ENCODE measurements at regions of chr14 and their contacts with region 1.

Region 1: DNA sequence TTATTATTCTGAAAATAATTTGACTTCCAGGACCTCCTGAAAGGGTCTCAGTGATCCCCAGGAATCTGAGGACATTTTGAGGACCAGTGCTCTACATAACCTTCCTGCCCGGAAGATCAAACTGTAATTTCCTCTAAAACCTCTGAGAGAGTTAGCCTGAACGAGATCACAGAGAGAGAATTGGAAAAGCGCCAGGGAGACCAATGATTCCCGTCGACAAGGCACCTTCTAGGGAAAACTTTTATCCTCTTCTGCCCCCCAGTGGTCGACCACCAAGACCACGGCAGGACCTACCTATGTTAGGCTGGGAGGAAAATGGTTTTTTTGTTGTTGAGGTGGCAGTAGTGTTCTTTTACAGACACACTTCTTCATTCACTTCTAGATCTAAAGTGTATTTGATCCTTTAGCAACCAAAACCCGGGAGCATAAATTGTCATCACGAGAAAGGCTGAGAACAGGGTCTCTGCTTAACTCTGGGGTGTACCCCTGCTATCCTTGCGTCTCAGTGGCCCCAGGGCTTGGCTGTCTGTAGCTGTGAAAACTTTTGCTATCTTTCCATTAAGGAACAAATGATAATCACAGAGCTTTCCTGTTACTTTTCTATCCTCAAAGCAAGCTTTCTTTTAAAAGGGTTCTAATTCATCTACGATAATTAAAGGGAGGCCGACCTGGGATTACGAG is 62.9 kb upstream of the NID2 start:
- DNase-seq: peak; percentile 93
- H3K4me3 ChIP-seq: no peak overlapping the region
- H3K27ac ChIP-seq: no peak overlapping the region
- H3K27me3 ChIP-seq: no peaks in the 10 kb centered on the region
- CTCF ChIP-seq: peak; percentile 77

Region 2: DNA sequence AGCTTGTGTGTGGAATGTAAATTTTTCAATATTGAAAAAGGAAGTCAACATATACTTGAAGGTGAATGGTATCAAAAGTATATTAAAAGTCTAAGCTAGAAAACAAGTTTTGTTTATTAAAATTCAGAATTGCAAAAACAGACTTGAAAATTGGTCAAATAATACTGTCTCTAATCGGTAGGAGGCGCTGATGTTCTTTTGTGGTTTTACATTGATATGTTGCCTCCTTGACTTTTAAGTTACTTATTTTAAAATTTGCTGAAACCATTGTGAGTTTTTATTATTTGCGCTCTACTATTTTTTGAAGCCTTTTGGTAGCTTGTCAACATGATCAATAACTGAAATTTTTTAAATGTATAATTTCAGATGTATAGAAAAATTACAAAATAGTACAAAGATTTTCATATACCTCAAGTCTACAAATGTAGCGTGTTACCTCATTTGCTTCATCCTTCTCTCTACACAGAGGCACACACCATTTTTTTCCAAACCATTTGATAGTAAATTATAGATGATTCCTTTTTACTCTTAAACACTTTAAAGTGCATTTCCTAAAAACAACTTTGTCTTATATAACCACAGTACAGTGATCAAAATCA is 135.5 kb before region 1 on chr14:
- CTCF ChIA-PET with region 1: interaction called, 101 read pairs
- POLR2A ChIA-PET with region 1: no interaction called
- DNase-seq: no peak
- H3K4me3 ChIP-seq: no peak overlapping the region
- H3K27ac ChIP-seq: no peak overlapping the region
- H3K27me3 ChIP-seq: no peaks in the 10 kb centered on the region
- CTCF ChIP-seq: peak; percentile 75

Region 3: GRCh38 chr14:52015411-52016030 is 116.3 kb before region 1 on chr14:
- CTCF ChIA-PET with region 1: interaction called, 10 read pairs
- POLR2A ChIA-PET with region 1: no interaction called
- DNase-seq: no peak
- H3K4me3 ChIP-seq: no peak overlapping the region
- H3K27ac ChIP-seq: no peak overlapping the region
- H3K27me3 ChIP-seq: no peaks in the 10 kb centered on the region
- CTCF ChIP-seq: peak; percentile 48

Region 4: DNA sequence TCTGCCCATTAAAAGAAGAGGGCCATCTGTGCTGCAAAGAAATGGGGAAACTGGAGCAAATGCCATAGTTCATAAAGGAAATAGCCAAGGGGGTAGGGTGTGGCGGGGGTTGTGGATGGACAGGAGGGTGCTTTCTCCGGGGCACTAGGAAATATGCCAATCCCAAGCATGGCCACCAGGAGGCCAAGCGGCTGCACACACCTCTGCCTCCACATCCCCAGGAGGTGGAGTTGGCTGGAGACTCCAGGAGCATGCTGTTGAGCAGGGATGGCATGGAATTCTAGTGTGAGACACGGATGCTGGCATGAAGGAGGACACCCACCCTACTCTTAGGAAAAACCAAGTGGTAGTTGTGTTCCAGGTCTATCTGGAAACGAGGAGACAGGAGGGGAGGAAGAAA is 88.1 kb before region 1 on chr14:
- CTCF ChIA-PET with region 1: interaction called, 25 read pairs
- POLR2A ChIA-PET with region 1: no interaction called
- DNase-seq: no peak
- H3K4me3 ChIP-seq: no peak overlapping the region
- H3K27ac ChIP-seq: no peak overlapping the region
- H3K27me3 ChIP-seq: no peaks in the 10 kb centered on the region
- CTCF ChIP-seq: peak; percentile 61

Measured in AG04450 (cell line).